ENCODE measurements at regions of chr20 and their contacts with region 1.

Region 1: GRCh38 chr20:23143098-23143497 is 57.0 kb upstream of the CD93 start:
- DNase-seq: peak; percentile 52 to 74 (median 61)
- H3K4me3 ChIP-seq: peak overlapping the region in 2 of 7 experiments; percentile 10 to 40
- H3K27ac ChIP-seq: no peak overlapping the region
- H3K4me1 ChIP-seq: peaks cover 12 to 61% (median 32%) of the 10 kb centered on the region in 4 experiments
- H3K27me3 ChIP-seq: no peaks in the 10 kb centered on the region

Region 2: GRCh38 chr20:23132930-23133559 is 10.1 kb before region 1 on chr20:
- CTCF ChIA-PET with region 1: interaction called, 10 read pairs
- POLR2A ChIA-PET with region 1: no interaction called
- DNase-seq: peak in 1 of 3 donors; percentile 41
- H3K4me3 ChIP-seq: no peak overlapping the region
- H3K27ac ChIP-seq: peak overlapping the region in 1 of 2 experiments; percentile 71
- H3K4me1 ChIP-seq: peaks cover 0 to 36% (median 8%) of the 10 kb centered on the region in 4 experiments
- H3K27me3 ChIP-seq: no peaks in the 10 kb centered on the region

Measured in common myeloid progenitor, CD34-positive (primary cell).